Dendritic cell treated with granulocyte-macrophage colony-stimulating factor and Interleukin-4, amounts not matched to agents 40 ng/mL and 50 ng/mL, for 4 days (primary cell): ENCODE measurements at regions of chr7 and their contacts with region 1.

Region 1: DNA sequence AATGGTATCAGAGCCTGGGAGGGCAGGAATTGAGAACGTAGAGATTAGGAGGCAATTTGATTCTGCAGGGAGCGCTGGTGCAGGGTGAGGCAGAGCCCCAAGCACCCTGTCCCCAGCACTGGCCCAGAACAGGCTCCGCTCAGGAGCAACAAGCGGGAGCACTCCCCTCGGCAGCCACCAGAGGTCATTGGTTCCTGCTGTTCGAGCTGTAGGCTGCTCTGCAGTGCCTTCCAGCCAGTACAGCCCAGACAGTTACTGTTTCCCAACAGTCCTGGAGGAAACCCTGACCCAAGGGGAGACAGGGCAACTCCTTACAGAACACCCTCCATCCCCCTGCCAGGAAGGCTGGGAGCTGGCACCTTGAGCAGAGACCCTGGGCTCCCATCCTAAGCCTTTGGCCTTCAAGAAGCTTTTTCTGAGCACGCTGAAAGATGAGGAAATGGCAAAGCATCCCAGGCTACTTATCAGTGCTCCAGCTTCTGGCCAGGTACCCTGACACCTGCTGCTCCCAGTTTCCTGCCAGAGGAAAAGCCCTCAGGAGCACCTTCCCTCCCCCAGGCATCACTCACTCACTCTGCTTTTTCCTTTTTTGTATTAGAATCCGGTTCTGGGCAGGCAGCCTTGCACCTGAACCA is 71.2 kb upstream of the EFCAB10 start:
- H3K4me3 Mint-ChIP-seq: no peak overlapping the region
- H3K27ac Mint-ChIP-seq: no peak overlapping the region
- H3K4me1 Mint-ChIP-seq: peaks cover 16% of the 10 kb centered on the region
- H3K27me3 Mint-ChIP-seq: no peaks in the 10 kb centered on the region

Region 2: DNA sequence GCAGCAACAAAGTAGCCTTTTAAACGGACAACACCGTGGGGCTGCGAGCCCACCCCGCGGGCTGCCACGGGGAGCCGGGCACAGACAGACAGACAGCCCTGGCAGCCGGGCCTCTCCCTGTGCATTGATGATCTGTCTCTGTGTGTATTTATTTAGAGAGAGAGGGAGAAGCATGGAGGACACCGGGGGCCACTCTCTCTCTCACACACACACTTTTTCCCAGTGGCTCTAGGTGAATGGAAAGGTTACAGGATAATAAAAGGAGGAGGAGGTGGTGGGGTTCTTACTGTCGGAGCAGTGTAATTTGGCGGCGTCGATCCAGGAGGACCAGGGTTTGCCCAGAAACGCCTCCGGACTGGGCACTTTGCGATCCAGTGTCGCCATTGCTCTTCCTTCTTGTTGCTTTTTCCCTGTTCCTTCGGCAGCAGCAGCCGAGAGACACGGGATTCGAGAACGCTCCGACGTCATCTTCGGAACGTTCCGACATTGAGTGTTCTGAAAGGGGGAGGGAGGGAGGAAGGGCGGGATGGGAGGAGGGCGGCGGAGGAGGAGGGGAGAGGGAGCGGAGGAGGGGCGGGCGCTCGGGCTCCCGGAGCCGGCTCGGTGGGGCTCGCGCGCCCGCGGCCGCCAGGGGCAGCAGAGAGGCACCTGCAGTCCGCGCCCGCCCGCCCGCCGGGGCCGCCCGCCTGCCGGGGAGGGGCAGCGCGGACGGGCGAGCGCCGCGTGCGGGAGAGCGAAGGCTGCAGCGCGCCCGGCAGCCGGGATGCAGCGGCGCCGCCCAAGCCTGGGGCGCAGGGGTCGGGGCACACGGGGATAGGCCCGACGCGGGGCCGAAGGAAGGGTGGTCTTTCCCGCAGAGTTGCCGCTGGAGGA is 223.9 kb after region 1 on chr7 and contains the start of gene ATXN7L1:
- intact Hi-C with region 1: loop called (anchors 5 kb)
- H3K4me3 Mint-ChIP-seq: peak within 1 kb of the TSS; percentile 88
- H3K27ac Mint-ChIP-seq: peak within 1 kb of the TSS; percentile 97
- H3K4me1 Mint-ChIP-seq: peaks cover 33% of the 10 kb centered on the region
- H3K27me3 Mint-ChIP-seq: peaks cover 34% of the 10 kb centered on the region

Region 3: DNA sequence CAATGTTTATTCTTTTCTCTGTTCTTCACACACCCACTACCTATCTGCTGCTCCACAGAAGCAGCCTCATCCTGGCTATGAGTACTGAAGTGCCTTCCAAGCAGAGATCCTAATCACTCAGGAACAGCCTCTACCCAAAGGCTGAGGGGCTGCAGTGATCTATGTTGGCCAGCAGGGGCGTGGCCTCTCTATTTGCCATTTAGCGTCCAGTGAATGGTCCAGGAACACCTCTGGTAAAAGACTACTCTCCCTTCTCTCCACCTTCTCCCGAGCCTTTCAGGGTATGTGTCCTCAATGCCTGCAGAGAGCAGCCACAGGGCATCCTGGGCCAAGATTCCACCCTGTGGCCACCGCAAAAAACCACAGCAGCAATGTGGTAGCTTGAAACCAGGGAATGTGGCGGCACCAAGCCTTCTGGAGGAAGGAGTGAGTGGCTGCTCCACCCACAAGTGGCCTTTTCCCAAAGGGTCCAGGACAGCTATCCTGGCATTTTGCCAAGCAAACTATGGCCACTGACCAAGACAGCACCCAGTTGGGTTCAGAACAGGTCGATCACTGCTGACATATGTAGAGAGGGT is 388.8 kb after region 1 on chr7:
- intact Hi-C with region 1: loop called (anchors 1 kb)
- H3K4me3 Mint-ChIP-seq: no peak overlapping the region
- H3K27ac Mint-ChIP-seq: no peak overlapping the region
- H3K4me1 Mint-ChIP-seq: peaks cover 16% of the 10 kb centered on the region
- H3K27me3 Mint-ChIP-seq: peaks cover 45% of the 10 kb centered on the region